GM10248 (cell line): ENCODE measurements at regions of chr19 and their contacts with region 1.

Region 1: DNA sequence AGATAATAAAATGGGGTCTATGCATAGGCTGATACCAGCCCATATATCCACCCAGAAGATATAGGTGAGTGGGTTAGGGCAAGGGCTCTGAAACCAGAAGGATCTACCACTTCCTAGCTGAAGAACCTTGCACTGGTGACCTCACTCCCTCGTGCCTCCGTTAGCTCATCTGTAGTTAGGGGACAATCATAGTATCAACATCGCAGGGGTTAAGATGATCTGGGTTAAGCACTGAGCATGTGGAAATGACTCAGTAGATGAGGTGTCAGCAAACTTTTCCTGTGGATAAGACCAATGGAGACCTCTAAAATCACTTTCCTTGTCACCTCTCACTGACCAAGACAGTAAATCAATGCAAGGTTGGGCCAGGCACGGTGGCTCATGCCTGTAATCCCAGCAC is 30.5 kb downstream of the TNFSF14 start:
- DNase-seq: no peak
- CTCF ChIP-seq: no peak

Region 2: GRCh38 chr19:6524311-6524710 is 115.1 kb before region 1 on chr19:
- CTCF ChIA-PET with region 1: no interaction called
- POLR2A ChIA-PET with region 1: no interaction called
- DNase-seq: no peak
- CTCF ChIP-seq: no peak

Region 3: GRCh38 chr19:6608940-6609339 is 30.5 kb before region 1 on chr19:
- CTCF ChIA-PET with region 1: no interaction called
- POLR2A ChIA-PET with region 1: no interaction called
- DNase-seq: peak; percentile 35
- CTCF ChIP-seq: no peak

Region 4: GRCh38 chr19:6651965-6652804 is 12.7 kb after region 1 on chr19:
- CTCF ChIA-PET with region 1: interaction called, 11 read pairs
- POLR2A ChIA-PET with region 1: interaction called, 3 read pairs
- DNase-seq: no peak
- CTCF ChIP-seq: no peak